ENCODE measurements at regions of chr2 and their contacts with region 1.

Region 1: GRCh38 chr2:37168217-37168981 is 11.6 kb upstream of the EIF2AK2 start:
- DNase-seq: no peak
- ATAC-seq: peak; percentile 91
- H3K4me3 ChIP-seq: no peak overlapping the region
- H3K27ac ChIP-seq: no peak overlapping the region
- H3K4me1 ChIP-seq: no peaks in the 10 kb centered on the region
- H3K27me3 ChIP-seq: no peaks in the 10 kb centered on the region
- CTCF ChIP-seq: peak; percentile 70 to 75 (median 73)
- EP300 ChIP-seq: no peak
- POLR2A ChIP-seq: no peak
- RAD21 ChIP-seq: peak; percentile 73

Region 2: DNA sequence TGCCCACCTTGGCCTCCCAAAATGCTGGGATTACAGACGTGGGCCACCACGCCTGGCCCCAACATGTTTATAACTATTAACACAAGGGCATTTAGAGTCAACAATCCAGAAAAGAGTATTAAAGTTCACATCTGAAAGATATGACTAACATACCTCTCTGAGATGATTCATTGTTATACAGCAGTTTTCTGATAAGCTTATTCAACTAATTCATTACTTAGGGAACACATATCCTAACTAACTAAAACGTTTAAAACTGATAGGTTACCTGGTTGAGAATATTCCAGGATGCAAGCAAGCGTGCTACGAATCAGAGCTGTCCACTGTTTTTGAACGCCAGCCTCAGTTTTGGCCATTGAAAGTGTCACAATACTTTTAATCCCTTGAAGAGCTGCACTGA is 168.1 kb before region 1 on chr2:
- CTCF ChIA-PET with region 1: no interaction called
- POLR2A ChIA-PET with region 1: no interaction called
- RAD21 ChIA-PET with region 1: no interaction called
- SMC1A ChIA-PET with region 1: no interaction called
- in situ Hi-C with region 1: no loop called
- intact Hi-C with region 1: no loop called
- DNase-seq: no peak
- ATAC-seq: no peak
- H3K4me3 ChIP-seq: no peak overlapping the region
- H3K27ac ChIP-seq: no peak overlapping the region
- H3K4me1 ChIP-seq: peaks cover 9% of the 10 kb centered on the region
- H3K27me3 ChIP-seq: no peaks in the 10 kb centered on the region
- CTCF ChIP-seq: no peak
- EP300 ChIP-seq: no peak
- POLR2A ChIP-seq: no peak
- RAD21 ChIP-seq: no peak

Region 3: GRCh38 chr2:37039580-37039979 is 128.8 kb before region 1 on chr2:
- CTCF ChIA-PET with region 1: no interaction called
- POLR2A ChIA-PET with region 1: interaction called, 10 read pairs
- RAD21 ChIA-PET with region 1: no interaction called
- SMC1A ChIA-PET with region 1: no interaction called
- in situ Hi-C with region 1: no loop called
- intact Hi-C with region 1: no loop called
- DNase-seq: no peak
- ATAC-seq: no peak
- H3K4me3 ChIP-seq: no peak overlapping the region
- H3K27ac ChIP-seq: no peak overlapping the region
- H3K4me1 ChIP-seq: no peaks in the 10 kb centered on the region
- H3K27me3 ChIP-seq: no peaks in the 10 kb centered on the region
- CTCF ChIP-seq: no peak
- EP300 ChIP-seq: no peak
- POLR2A ChIP-seq: no peak
- RAD21 ChIP-seq: no peak

Region 4: GRCh38 chr2:37156857-37157714 is 11.3 kb before region 1 on chr2 and contains the start of gene EIF2AK2:
- CTCF ChIA-PET with region 1: interaction called, 12 read pairs
- POLR2A ChIA-PET with region 1: interaction called, 3 read pairs
- RAD21 ChIA-PET with region 1: interaction called, 5 read pairs
- SMC1A ChIA-PET with region 1: interaction called, 4 read pairs
- in situ Hi-C with region 1: no loop called
- intact Hi-C with region 1: no loop called
- DNase-seq: no peak
- ATAC-seq: peak; percentile 92
- H3K4me3 ChIP-seq: peak within 1 kb of the TSS; percentile 92
- H3K27ac ChIP-seq: peak within 1 kb of the TSS; percentile 95
- H3K4me1 ChIP-seq: peaks cover 12% of the 10 kb centered on the region
- H3K27me3 ChIP-seq: no peaks in the 10 kb centered on the region
- CTCF ChIP-seq: no peak
- EP300 ChIP-seq: no peak
- POLR2A ChIP-seq: peak; percentile 87
- RAD21 ChIP-seq: no peak
- polyA plus RNA-seq, gene EIF2AK2: 16.2 to 34.6 TPM

Region 5: GRCh38 chr2:37180006-37180639 is 11.7 kb after region 1 on chr2:
- CTCF ChIA-PET with region 1: interaction called, 23 read pairs
- POLR2A ChIA-PET with region 1: no interaction called
- RAD21 ChIA-PET with region 1: no interaction called
- SMC1A ChIA-PET with region 1: no interaction called
- in situ Hi-C with region 1: no loop called
- intact Hi-C with region 1: no loop called
- DNase-seq: no peak
- ATAC-seq: no peak
- H3K4me3 ChIP-seq: no peak overlapping the region
- H3K27ac ChIP-seq: no peak overlapping the region
- H3K4me1 ChIP-seq: no peaks in the 10 kb centered on the region; the same call in 1 of the 2 replicates
- H3K27me3 ChIP-seq: no peaks in the 10 kb centered on the region
- CTCF ChIP-seq: 0 out of 6 replicates have a peak, but pooled peaks of 1 of the 3 experiments have one; percentile 0
- EP300 ChIP-seq: no peak
- POLR2A ChIP-seq: no peak
- RAD21 ChIP-seq: peak; percentile 21; the same call in 1 of the 2 replicates

Region 6: DNA sequence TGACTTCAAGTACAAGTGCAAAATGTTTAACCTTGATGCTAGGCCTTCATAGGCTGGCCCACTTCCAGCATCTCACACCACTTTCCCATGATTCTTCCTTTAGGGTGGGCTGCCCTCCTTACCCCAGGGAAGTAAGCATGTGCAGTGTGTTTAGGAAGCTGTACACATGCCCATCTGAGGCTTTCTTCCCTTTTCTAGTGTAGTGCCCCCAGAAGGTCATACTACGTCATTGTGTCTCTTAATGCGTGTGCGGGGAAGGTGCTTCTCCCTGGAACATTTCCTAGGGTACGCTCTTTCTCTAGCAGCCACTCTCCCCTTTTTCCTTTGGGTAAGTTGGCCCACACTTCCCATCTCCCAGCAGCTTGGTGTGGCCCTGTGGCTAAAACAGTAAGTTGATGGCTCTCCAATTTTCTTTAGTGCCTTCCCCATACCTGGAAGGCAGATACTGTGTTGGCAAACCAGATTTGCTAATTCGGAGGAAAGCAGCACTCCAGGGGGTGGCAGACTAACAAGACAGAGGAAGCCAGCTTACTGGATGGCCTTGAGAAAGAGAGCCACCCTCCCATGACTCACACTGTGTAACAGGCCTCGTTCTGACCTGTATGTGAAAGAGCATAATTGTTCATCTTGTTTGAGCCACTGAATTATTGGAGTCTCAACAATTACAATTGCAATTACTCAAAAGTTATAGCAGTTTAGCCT is 21.2 kb after region 1 on chr2:
- CTCF ChIA-PET with region 1: interaction called, 10 read pairs
- POLR2A ChIA-PET with region 1: no interaction called
- RAD21 ChIA-PET with region 1: no interaction called
- SMC1A ChIA-PET with region 1: no interaction called
- in situ Hi-C with region 1: no loop called
- intact Hi-C with region 1: no loop called
- DNase-seq: no peak
- ATAC-seq: no peak; the same call in 2 of the 3 replicates
- H3K4me3 ChIP-seq: no peak overlapping the region
- H3K27ac ChIP-seq: no peak overlapping the region
- H3K4me1 ChIP-seq: no peaks in the 10 kb centered on the region
- H3K27me3 ChIP-seq: no peaks in the 10 kb centered on the region
- CTCF ChIP-seq: no peak
- EP300 ChIP-seq: no peak
- POLR2A ChIP-seq: no peak
- RAD21 ChIP-seq: no peak

Region 7: DNA sequence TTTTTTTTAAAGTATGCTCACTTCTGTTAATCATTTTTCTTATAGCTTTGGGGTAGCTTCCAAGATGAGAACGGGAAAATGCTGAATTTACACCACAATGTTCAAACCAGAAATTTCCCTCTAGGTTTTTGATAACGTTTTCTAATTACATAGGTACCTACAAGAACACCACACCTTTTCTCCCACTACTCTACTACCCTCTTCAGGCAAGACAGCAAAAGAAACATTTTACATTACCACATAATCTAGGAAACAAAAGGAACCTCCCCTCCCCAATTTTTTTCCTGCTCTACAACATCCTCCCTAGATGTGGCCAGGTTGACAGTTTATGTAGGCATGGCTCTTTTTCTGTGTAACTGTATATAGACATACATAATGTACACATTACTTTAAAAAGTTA is 95.4 kb after region 1 on chr2:
- CTCF ChIA-PET with region 1: interaction called, 10 read pairs
- POLR2A ChIA-PET with region 1: no interaction called
- RAD21 ChIA-PET with region 1: no interaction called
- SMC1A ChIA-PET with region 1: interaction called, 10 read pairs
- in situ Hi-C with region 1: no loop called
- intact Hi-C with region 1: no loop called
- DNase-seq: no peak
- ATAC-seq: no peak
- H3K4me3 ChIP-seq: no peak overlapping the region
- H3K27ac ChIP-seq: no peak overlapping the region
- H3K4me1 ChIP-seq: no peaks in the 10 kb centered on the region
- H3K27me3 ChIP-seq: no peaks in the 10 kb centered on the region
- CTCF ChIP-seq: no peak; a peak in 1 of 6 replicates
- EP300 ChIP-seq: no peak
- POLR2A ChIP-seq: no peak
- RAD21 ChIP-seq: 0 out of 2 replicates have a peak, but pooled peaks have one; percentile 9

Region 8: GRCh38 chr2:37282746-37283145 is 114.3 kb after region 1 on chr2:
- CTCF ChIA-PET with region 1: interaction called, 6 read pairs
- POLR2A ChIA-PET with region 1: no interaction called
- RAD21 ChIA-PET with region 1: interaction called, 5 read pairs
- SMC1A ChIA-PET with region 1: no interaction called
- in situ Hi-C with region 1: no loop called
- intact Hi-C with region 1: loop called (anchors 1 kb)
- DNase-seq: no peak
- ATAC-seq: no peak
- H3K4me3 ChIP-seq: no peak overlapping the region
- H3K27ac ChIP-seq: no peak overlapping the region
- H3K4me1 ChIP-seq: no peaks in the 10 kb centered on the region
- H3K27me3 ChIP-seq: no peaks in the 10 kb centered on the region; a peak in 1 of 4 replicates
- CTCF ChIP-seq: no peak
- EP300 ChIP-seq: no peak
- POLR2A ChIP-seq: no peak
- RAD21 ChIP-seq: no peak